ENCODE measurements at regions of chr2 and their contacts with region 1.

Region 1: DNA sequence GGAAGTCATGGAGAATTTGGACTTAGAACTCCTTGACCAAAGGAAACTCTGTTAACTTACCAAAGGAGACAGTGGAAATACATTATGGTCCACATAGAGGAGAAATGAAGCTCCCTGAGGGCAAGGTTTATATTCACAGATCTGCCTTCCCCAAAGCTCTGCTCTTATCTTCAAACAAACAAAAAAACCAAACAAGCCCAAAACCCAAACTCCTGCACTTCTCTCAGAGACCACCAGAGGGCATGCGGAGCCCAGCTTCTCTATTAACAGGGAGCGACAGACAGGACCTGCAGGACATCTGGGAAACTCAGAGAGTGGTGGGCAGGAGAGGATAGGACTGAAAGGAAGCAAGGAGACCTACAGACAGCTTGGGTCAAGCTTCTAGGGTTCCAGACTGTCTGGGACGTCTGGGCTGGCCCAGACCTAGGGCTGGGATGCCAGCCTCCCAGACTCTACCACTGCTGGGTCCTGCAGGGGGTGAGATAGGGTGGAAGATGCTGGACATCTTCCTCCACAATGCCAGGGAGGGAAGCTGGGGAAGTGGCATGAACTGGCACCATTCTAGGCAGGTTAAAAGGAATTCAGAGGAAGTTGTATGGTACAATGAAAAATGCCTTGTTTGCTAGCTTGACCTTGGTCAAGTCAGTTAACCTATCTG is 4.0 kb upstream of the WNT10A start:
- DNase-seq: peak; percentile 81
- ATAC-seq: peak; percentile 18
- H3K4me3 Mint-ChIP-seq: no peak overlapping the region
- H3K27ac Mint-ChIP-seq: no peak overlapping the region
- H3K4me1 Mint-ChIP-seq: peaks cover 33% of the 10 kb centered on the region
- H3K27me3 Mint-ChIP-seq: peaks cover 97% of the 10 kb centered on the region
- CTCF ChIP-seq: peak; percentile 88

Region 2: DNA sequence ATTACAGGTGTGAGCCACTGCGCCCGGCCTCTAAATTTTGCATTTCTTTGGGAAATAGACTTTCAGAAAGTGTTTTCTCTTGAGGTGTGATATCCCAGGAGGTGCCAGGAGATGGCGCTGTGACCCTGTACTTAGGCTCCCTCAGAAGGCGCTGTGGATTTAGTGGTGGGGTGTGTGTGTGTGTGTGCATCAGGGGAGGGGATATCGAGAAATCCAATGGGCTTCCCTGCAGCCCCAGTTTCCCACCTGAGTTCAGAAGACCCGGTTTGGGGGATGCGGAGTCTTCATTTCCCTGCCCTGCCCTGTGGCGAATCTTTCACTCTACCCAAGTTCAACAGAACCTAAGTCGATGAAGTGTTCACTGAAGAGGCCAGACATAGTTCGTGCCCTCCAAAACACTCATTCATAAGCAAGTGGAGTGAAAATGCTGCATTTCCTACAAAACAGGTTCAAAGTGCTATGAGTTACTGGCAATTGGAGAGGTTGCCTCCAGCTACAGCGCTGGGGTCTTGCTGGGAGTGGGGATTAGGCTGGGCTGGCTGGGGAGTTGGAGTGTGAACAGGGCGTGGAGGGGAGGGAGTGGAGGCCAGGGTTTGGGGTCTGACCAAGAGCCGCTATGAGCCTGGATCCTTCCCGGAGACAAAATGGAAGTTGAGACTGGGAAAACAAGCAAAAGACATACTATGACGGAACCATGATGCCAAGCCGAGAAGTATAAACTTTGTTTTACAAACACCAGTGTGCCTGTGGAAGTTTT is 23.6 kb before region 1 on chr2:
- CTCF ChIA-PET with region 1: interaction called, 22 read pairs
- POLR2A ChIA-PET with region 1: interaction called, 4 read pairs
- DNase-seq: peak; percentile 83
- ATAC-seq: peak; percentile 80
- H3K4me3 Mint-ChIP-seq: no peak overlapping the region
- H3K27ac Mint-ChIP-seq: no peak overlapping the region
- H3K4me1 Mint-ChIP-seq: peaks cover 37% of the 10 kb centered on the region
- H3K27me3 Mint-ChIP-seq: peaks cover 60% of the 10 kb centered on the region
- CTCF ChIP-seq: peak; percentile 87

Region 3: DNA sequence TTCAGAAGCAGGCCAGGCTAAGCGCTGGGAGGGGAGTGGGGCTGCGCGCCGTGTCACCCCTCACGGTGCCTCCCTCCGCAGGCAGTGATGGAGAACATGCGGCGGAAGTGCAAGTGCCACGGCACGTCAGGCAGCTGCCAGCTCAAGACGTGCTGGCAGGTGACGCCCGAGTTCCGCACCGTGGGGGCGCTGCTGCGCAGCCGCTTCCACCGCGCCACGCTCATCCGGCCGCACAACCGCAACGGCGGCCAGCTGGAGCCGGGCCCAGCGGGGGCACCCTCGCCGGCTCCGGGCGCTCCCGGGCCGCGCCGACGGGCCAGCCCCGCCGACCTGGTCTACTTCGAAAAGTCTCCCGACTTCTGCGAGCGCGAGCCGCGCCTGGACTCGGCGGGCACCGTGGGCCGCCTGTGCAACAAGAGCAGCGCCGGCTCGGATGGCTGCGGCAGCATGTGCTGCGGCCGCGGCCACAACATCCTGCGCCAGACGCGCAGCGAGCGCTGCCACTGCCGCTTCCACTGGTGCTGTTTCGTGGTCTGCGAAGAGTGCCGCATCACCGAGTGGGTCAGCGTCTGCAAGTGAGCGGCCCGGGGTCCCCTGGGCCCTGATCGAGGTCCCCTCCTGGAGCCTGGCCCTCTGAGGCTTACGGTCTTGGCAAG is 16.1 kb after region 1 on chr2:
- CTCF ChIA-PET with region 1: interaction called, 422 read pairs
- POLR2A ChIA-PET with region 1: interaction called, 3 read pairs
- DNase-seq: peak; percentile 72
- ATAC-seq: peak; percentile 61
- H3K4me3 Mint-ChIP-seq: peak overlapping the region; percentile 61
- H3K27ac Mint-ChIP-seq: no peak overlapping the region
- H3K4me1 Mint-ChIP-seq: peaks cover 15% of the 10 kb centered on the region
- H3K27me3 Mint-ChIP-seq: peaks cover 99% of the 10 kb centered on the region
- CTCF ChIP-seq: no peak

Region 4: DNA sequence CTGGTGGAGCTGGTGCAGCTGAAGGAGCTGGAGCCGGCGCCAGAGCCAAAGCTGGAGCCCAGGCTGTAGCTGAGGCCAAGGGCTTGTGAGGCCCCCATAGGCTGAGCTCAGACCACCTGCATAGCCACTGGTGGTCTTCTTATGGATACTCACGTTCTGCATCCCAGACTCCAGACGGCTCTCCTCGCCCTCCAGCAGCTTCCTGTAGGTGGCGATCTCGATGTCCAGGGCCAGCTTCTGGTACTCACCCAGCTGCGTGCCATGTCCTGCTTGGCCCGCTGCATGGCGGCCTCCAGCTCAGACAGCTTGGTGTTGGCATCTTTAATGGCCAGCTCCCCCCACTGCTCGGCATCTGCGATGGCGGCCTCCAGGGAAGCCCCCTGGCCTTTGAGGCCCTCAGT is 76.8 kb after region 1 on chr2:
- CTCF ChIA-PET with region 1: interaction called, 10 read pairs
- POLR2A ChIA-PET with region 1: no interaction called
- DNase-seq: peak; percentile 61
- ATAC-seq: peak; percentile 81
- H3K4me3 Mint-ChIP-seq: no peak overlapping the region
- H3K27ac Mint-ChIP-seq: no peak overlapping the region
- H3K4me1 Mint-ChIP-seq: no peaks in the 10 kb centered on the region
- H3K27me3 Mint-ChIP-seq: peaks cover 68% of the 10 kb centered on the region
- CTCF ChIP-seq: no peak

Region 5: DNA sequence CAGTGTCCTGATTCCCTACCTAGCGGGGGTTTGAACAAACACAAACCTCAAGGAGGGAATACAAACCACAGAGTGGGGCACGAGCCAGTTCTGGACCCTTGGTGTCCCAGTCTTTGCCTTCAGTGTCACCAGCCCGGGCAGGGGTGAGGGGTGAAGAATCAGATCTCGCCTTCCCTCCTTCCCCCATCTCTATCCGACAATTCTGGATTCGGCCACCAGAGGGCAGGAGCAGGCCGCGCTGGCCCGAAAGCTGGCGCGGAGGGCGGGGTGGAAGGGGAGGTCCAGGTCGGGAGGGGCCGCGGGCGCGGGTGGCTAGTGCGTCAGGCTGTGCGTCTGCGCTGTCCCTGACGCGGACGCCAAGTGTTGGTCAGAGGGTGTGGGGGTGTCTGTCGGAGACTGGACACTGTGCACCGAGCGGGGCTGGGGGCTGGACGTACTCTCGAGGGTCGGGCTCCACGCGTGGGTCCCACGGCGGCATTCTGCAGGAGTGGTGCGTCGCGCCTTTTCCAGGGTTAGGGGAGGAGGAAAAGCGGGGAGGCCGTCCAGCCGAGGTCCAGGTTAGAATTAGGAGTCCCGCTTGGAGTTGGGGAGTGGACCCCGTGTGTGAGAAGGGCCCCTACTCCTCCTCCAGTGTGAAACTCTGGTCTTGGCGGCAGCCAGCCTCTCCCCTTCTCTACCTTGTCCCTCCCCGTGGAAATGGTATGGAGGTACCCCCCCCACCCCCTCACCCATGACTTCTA is 119.5 kb after region 1 on chr2:
- CTCF ChIA-PET with region 1: interaction called, 25 read pairs
- POLR2A ChIA-PET with region 1: no interaction called
- DNase-seq: peak; percentile 93
- ATAC-seq: peak; percentile 49
- H3K4me3 Mint-ChIP-seq: peak overlapping the region; percentile 60
- H3K27ac Mint-ChIP-seq: no peak overlapping the region
- H3K4me1 Mint-ChIP-seq: peaks cover 26% of the 10 kb centered on the region
- H3K27me3 Mint-ChIP-seq: peaks cover 100% of the 10 kb centered on the region
- CTCF ChIP-seq: peak; percentile 90